Sciatic nerve (tissue), 2 donors: ENCODE measurements at regions of chr5 and their contacts with region 1.

Region 1: DNA sequence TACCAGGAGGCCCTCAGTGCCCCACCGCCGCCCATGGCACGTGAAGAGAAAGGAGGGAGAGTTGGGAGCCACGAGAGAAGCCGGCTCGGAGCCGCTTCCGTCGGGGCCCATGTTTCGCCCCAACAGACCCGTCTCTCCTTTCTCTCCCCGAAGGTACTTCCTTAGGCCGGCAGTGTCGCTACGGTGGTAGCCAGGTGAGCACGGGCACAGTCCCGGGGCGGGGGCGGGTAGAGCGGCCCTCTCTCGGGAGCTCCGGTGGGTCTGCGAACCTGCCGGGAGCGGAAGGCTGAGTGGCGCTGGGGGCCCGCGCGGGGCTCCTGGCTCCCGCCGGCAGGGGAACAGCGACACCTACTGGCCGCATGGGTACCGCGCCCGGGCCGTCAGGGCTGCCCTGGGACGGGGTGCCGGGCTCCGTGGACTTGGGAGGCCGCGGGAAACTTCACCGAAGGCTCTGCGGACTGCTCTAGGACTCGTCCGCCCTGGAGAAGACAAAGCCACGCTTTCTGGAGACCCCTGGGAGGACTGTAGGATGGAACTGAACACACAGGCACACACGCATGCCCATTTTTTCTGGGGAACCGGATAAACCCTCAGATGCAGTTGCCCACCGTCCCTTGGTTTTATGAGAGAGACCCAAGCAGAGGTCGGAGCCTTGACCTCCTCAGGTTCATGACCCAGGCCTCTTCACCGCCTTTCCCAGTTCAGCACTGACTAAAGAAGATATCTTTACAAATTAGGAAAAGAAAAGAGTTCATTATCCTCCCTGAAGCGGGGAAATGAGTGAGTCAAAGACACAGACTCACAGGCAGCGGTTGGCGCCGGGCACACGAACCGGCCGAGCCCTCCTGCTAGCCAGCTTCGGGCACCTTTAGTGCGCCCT is 202.5 kb downstream of the MEF2C start:
- DNase-seq: peak; percentile 88
- ATAC-seq: peak; percentile 86

Region 2: GRCh38 chr5:88140856-88141752 is 539.4 kb before region 1 on chr5:
- intact Hi-C with region 1: loop called (anchors 5 kb)
- DNase-seq: peak; percentile 97
- ATAC-seq: peak; percentile 98

Region 3: DNA sequence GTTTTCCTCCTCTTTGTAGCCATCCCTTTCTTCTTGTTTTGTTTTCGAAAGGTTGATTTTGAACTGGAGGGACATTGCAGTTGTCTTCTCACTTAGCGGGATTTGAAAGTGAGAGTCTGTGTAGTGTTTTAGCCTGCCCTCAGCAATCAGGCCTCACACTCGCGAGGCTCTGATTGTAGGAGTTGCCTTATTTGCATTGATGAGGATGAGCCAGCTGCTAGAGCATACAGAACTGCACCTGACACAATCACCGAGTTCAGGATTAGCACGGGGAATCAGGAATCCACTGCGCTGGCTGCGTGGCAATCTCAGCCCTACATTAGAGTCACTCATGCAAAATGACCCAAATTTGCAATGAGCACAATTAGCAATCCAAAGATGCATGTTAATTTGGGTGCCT is 289.4 kb before region 1 on chr5:
- intact Hi-C with region 1: loop called (anchors 10 kb)
- DNase-seq: no peak
- ATAC-seq: no peak

Region 4: GRCh38 chr5:88691945-88692868 is 11.7 kb after region 1 on chr5:
- intact Hi-C with region 1: no loop called
- DNase-seq: no peak
- ATAC-seq: no peak